ENCODE measurements at regions of chr2 and their contacts with region 1.

Region 1: DNA sequence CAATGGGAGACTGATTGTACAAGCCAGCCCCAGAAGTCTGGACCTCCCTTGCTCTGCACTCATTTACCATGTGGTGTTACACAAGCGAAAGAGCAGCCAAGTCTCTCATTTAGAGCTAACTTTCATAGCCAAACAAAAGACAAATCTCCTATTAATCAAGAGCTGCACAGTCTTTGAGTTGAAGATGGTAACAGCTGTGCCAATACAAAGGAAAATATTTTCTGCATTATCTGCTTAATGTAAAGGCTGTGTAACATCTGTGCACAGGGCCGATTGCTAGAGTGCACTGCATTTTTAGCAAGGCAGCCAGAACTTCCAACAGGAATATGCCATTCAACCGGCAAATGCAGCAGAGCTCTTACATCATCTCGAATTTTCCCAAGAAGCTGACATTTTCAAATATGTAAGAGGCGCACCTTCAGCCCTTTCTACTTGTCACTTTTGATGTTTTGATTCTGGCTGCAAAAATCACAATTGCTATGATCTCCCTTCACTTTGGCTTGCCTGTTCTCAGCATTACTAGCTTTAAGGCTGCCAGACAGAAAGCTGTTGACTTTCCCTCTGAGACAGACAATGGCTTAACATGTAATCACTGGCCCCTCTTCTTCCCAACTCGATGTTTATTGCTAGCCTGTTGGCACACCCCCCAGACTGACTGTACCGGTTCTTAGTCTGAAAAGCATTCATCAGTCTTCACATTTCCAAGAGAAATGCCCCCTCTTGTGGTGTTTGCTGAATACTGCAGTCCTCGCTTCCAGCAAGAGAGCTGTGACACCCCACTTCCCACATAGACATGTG is 96.9 kb upstream of the TANK start:
- DNase-seq: peak; percentile 84
- ATAC-seq: peak; percentile 96
- H3K4me3 Mint-ChIP-seq: no peak overlapping the region
- H3K27ac Mint-ChIP-seq: no peak overlapping the region
- H3K4me1 Mint-ChIP-seq: peaks cover 9% of the 10 kb centered on the region
- H3K27me3 Mint-ChIP-seq: peaks cover 2% of the 10 kb centered on the region

Region 2: GRCh38 chr2:161077367-161078210 is 14.2 kb after region 1 on chr2:
- CTCF ChIA-PET with region 1: interaction called, 37 read pairs
- DNase-seq: peak; percentile 93
- ATAC-seq: peak; percentile 89
- H3K4me3 Mint-ChIP-seq: peak overlapping the region; percentile 54
- H3K27ac Mint-ChIP-seq: peak overlapping the region; percentile 90
- H3K4me1 Mint-ChIP-seq: peaks cover 46% of the 10 kb centered on the region
- H3K27me3 Mint-ChIP-seq: no peaks in the 10 kb centered on the region

Region 3: DNA sequence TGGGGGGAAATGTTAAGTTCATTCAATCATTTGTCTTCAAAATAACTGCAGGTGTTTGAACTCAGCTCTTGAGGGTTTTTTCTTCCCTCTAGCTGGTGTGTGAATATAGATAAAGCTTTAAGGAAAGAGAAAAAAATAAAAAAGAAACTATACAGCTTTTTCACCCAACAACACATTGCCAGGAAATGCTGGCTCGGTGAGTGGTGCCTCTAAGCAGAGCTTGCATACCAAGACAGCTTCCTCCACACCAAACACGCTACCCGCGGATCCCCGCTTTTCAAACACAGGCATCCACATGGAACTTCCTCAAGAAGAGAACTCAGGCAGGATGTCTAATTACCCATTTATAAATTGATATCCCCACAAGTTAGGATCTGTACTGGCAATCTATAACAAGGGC is 27.1 kb after region 1 on chr2:
- CTCF ChIA-PET with region 1: interaction called, 12 read pairs
- DNase-seq: peak; percentile 78
- ATAC-seq: peak; percentile 89
- H3K4me3 Mint-ChIP-seq: peak overlapping the region; percentile 52
- H3K27ac Mint-ChIP-seq: peak overlapping the region; percentile 82
- H3K4me1 Mint-ChIP-seq: peaks cover 47% of the 10 kb centered on the region
- H3K27me3 Mint-ChIP-seq: no peaks in the 10 kb centered on the region

Region 4: DNA sequence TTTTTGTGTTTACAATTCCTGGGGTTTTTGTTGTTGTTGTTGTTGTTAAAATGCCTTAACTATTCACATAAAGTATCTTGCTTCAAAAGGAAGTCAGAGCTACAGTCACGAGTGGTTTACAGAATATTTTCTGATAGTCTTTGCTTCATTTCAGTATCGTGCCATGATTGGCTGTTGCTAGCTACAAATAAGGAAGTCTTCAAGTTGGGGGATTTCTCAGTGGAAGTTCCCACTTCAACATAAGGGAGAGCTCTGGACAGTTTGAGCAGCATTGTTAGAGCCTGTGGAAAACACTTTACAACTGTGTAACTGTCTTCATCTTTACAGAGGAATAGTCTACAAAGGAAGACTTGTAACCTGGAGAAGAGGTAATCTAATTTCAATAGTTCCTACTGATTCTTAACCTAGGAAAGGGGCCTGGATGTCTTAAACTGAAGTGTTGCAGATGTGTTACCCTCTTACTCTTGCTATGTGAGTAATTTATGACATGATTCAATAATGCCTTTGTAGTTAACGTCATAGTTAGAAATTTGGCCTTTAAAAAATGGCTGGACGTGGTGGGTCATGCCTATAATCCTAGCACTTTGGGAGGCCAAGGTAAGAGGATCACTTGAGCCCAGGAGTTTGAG is 73.5 kb after region 1 on chr2:
- CTCF ChIA-PET with region 1: interaction called, 12 read pairs
- DNase-seq: no peak
- ATAC-seq: peak; percentile 76
- H3K4me3 Mint-ChIP-seq: peak overlapping the region; percentile 84
- H3K27ac Mint-ChIP-seq: peak overlapping the region; percentile 91
- H3K4me1 Mint-ChIP-seq: peaks cover 39% of the 10 kb centered on the region
- H3K27me3 Mint-ChIP-seq: peaks cover 3% of the 10 kb centered on the region